ENCODE measurements at regions of chr1 and their contacts with region 1.

Region 1: DNA sequence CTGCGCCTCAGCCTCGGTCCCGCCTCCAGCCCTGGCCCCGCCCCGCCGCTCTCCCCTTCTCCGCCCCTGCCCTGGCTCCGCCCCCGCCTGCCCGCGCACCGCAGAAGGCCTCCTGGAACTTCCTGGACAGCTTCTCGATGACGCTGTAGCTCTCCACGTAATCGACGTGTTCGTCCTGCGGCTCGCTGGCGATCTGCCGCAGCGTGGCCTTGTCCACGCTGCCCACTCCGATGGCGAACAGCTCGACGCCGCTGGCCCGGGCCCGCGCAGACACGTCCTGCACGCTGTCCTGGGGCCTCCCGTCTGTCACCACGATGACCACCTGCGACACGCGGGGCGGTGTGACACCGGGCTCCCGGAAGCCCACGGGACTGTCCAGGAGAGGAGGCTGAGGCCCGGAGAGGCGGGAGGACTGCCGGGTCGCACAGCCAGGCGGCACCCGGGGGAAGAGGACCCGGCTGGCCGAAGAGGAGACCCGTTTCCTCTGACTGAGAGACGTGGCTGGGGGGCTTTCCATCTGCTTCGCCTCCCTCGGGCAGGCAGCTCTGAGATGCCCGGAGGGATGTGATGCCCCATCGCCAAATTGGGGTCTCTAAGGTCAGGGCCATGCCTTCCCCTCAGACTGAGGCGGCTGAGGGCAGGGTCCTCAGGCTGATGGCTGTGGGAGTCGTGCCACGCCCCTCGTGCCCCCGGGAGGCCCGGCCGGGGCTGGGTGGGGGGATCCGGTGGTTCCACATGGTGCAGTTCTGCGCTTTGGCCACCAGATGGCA is 4.6 kb downstream of the MATN1 start:
- DNase-seq: peak; percentile 84 to 86
- H3K4me3 ChIP-seq: peak overlapping the region; percentile 53 to 80
- H3K27ac ChIP-seq: peak overlapping the region; percentile 99 to 100
- H3K4me1 ChIP-seq: no peaks in the 10 kb centered on the region
- H3K27me3 ChIP-seq: no peaks in the 10 kb centered on the region
- CTCF ChIP-seq: peak; percentile 98 to 99 (median 98)
- POLR2A ChIP-seq: peak; percentile 96 to 98

Region 2: GRCh38 chr1:29230553-29231378 is 1488.1 kb before region 1 on chr1 and contains the start of gene MECR:
- intact Hi-C with region 1: loop called (anchors 10 kb)
- DNase-seq: peak; percentile 92 to 95
- H3K4me3 ChIP-seq: peak within 1 kb of the TSS; percentile 58 to 77
- H3K27ac ChIP-seq: peak within 1 kb of the TSS; percentile 71 to 75
- H3K4me1 ChIP-seq: peaks cover 0 to 9% of the 10 kb centered on the region in 2 donors
- H3K27me3 ChIP-seq: no peaks in the 10 kb centered on the region
- CTCF ChIP-seq: peak; percentile 17 to 46 (median 28)
- POLR2A ChIP-seq: peak; percentile 19 to 70
- total RNA-seq, gene MECR: 7.4 to 23.4 (median 20.7) TPM

Region 3: DNA sequence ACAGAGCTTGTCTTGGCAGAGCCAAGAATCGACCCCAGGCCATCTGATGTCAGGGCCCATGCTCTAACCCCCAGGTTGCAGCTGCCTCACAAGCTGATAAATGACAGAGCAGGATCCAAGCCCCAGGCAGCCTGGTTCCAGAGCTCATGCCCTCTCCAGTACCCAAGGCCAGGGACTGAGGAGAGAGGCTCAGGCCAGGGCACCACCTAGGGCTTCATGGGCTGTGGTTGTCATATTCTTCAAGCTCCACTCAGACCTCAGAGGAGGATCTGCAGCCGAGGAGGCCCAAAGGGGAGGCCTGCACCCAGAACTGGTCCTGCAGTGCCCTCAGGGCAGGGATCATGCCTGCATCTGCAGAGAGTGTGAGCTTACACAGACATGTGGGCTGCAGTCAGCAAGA is 296.6 kb before region 1 on chr1:
- intact Hi-C with region 1: no loop called
- DNase-seq: peak; percentile 4 to 5
- H3K4me3 ChIP-seq: no peak overlapping the region
- H3K27ac ChIP-seq: no peak overlapping the region
- H3K4me1 ChIP-seq: no peaks in the 10 kb centered on the region
- H3K27me3 ChIP-seq: no peaks in the 10 kb centered on the region
- CTCF ChIP-seq: no peak
- POLR2A ChIP-seq: no peak

Region 4: GRCh38 chr1:30476911-30477459 is 241.8 kb before region 1 on chr1:
- intact Hi-C with region 1: no loop called
- DNase-seq: no peak
- H3K4me3 ChIP-seq: no peak overlapping the region
- H3K27ac ChIP-seq: no peak overlapping the region
- H3K4me1 ChIP-seq: no peaks in the 10 kb centered on the region
- H3K27me3 ChIP-seq: no peaks in the 10 kb centered on the region
- CTCF ChIP-seq: no peak
- POLR2A ChIP-seq: no peak

Region 5: GRCh38 chr1:30779294-30780071 is 60.7 kb after region 1 on chr1:
- intact Hi-C with region 1: loop called (anchors 5 kb)
- DNase-seq: peak; percentile 76 to 83
- H3K4me3 ChIP-seq: no peak overlapping the region
- H3K27ac ChIP-seq: no peak overlapping the region
- H3K4me1 ChIP-seq: peaks cover 0 to 4% of the 10 kb centered on the region in 2 donors
- H3K27me3 ChIP-seq: no peaks in the 10 kb centered on the region
- CTCF ChIP-seq: peak; percentile 87 to 97 (median 92)
- POLR2A ChIP-seq: no peak

Region 6: GRCh38 chr1:31072304-31072746 is 353.5 kb after region 1 on chr1:
- intact Hi-C with region 1: loop called (anchors 10 kb)
- DNase-seq: no peak
- H3K4me3 ChIP-seq: no peak overlapping the region
- H3K27ac ChIP-seq: no peak overlapping the region
- H3K4me1 ChIP-seq: no peaks in the 10 kb centered on the region
- H3K27me3 ChIP-seq: no peaks in the 10 kb centered on the region
- CTCF ChIP-seq: no peak
- POLR2A ChIP-seq: no peak